Endothelial cell of umbilical vein (primary cell): ENCODE measurements at regions of chr11 and their contacts with region 1.

Region 1: DNA sequence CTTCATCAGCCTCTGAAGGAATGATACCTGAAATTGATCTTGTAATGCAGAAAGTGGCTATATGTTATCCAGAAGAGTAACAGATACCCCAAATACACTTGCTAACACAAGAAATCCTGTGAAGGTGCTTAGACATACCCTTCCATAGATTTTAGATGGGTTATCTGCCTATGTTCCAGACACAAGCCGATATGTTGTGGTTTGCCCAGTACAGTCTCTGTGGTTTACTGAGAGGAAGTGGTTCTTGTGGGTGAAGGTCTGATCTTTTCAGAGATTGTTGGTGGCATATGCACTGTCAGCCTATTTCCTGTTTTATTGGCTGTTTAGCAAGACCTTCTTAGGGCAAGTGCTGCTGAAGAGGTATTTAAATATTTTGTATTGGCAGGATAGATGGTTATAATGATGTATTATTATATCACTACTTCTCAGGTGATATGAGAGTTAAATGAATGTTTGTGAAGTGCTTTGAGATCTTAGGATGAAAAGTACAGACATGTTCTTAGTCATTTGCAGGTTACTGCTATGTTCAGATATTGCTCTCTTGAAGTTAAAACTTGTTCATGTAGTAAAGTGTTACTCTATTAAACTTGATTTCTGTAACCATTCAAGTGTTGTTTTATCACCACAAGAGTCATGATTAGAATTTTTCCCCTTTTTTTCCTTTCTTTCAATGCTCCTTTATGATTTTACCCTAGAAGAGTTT is 8.2 kb downstream of the ARHGEF12 start:
- DNase-seq: no peak
- H3K4me3 ChIP-seq: no peak overlapping the region
- H3K27ac ChIP-seq: no peak overlapping the region
- H3K4me1 ChIP-seq: peaks cover 59% of the 10 kb centered on the region
- H3K27me3 ChIP-seq: no peaks in the 10 kb centered on the region
- CTCF ChIP-seq: no peak
- POLR2A ChIP-seq: no peak

Region 2: DNA sequence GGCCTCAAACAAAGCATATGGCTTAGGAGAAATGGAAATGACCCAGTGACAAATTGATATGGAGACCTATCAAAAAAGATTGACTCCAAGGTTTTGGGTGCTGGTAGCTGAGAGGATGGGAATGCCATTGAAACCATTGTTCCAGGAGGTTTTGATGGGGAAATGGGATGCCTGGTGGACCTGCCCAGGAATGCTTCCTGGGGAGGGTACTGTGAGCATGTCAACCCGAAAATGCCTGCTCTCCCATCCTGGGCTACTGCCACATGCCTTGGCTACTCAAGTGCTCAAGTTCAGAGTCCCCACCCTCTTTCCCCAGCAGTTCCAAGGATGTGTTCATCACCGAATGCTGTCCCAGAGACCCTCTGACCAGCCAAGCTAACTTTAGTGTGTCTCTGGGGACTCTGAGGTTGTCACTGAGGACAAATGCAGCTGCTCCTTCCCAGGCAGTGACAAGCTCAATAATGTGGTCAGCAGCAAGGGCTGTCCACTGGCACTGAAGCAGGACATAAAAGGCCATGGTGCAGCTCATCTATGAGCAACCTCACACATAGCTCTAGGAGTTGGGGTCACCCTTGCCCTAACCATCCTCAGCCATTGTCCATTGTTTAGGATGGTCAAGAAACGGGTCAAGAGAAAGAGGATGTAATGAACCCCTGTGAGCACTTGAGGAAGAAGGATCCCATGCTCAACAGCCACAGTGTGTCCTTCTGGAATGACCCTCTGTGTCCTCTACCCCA is 290.3 kb before region 1 on chr11:
- CTCF ChIA-PET with region 1: no interaction called
- POLR2A ChIA-PET with region 1: no interaction called
- dilution Hi-C with region 1: no loop called
- intact Hi-C with region 1: no loop called
- DNase-seq: no peak
- H3K4me3 ChIP-seq: no peak overlapping the region
- H3K27ac ChIP-seq: no peak overlapping the region
- H3K4me1 ChIP-seq: no peaks in the 10 kb centered on the region
- H3K27me3 ChIP-seq: peaks cover 0 to 4% of the 10 kb centered on the region in 2 experiments
- CTCF ChIP-seq: no peak
- POLR2A ChIP-seq: no peak

Region 3: GRCh38 chr11:120400564-120401364 is 56.3 kb after region 1 on chr11:
- CTCF ChIA-PET with region 1: interaction called, 11 read pairs
- POLR2A ChIA-PET with region 1: interaction called, 4 read pairs
- dilution Hi-C with region 1: no loop called
- intact Hi-C with region 1: loop called (anchors 1 kb)
- DNase-seq: peak; percentile 93
- H3K4me3 ChIP-seq: peak overlapping the region in 2 of 3 experiments; percentile 16 to 73
- H3K27ac ChIP-seq: peak overlapping the region; percentile 78
- H3K4me1 ChIP-seq: peaks cover 36% of the 10 kb centered on the region
- H3K27me3 ChIP-seq: no peaks in the 10 kb centered on the region
- CTCF ChIP-seq: no peak
- POLR2A ChIP-seq: no peak

Region 4: GRCh38 chr11:120413480-120413879 is 69.0 kb after region 1 on chr11:
- CTCF ChIA-PET with region 1: no interaction called
- POLR2A ChIA-PET with region 1: no interaction called
- dilution Hi-C with region 1: loop called (anchors 10 kb)
- intact Hi-C with region 1: no loop called
- DNase-seq: no peak
- H3K4me3 ChIP-seq: no peak overlapping the region
- H3K27ac ChIP-seq: no peak overlapping the region
- H3K4me1 ChIP-seq: peaks cover 6% of the 10 kb centered on the region
- H3K27me3 ChIP-seq: no peaks in the 10 kb centered on the region
- CTCF ChIP-seq: no peak
- POLR2A ChIP-seq: no peak